Activated CD4-positive, alpha-beta memory T cell treated with anti-CD3 and anti-CD28 coated beads for 36 hours (primary cell): ENCODE measurements at regions of chr5 and their contacts with region 1.

Region 1: GRCh38 chr5:143824851-143825720 is 13.1 kb downstream of the HMHB1 start:
- DNase-seq: peak; percentile 89
- H3K4me3 Mint-ChIP-seq: no peak overlapping the region
- H3K27ac Mint-ChIP-seq: no peak overlapping the region
- H3K4me1 Mint-ChIP-seq: peaks cover 22% of the 10 kb centered on the region
- H3K27me3 Mint-ChIP-seq: peaks cover 3% of the 10 kb centered on the region

Region 2: GRCh38 chr5:143101121-143101520 is 724.0 kb before region 1 on chr5:
- CTCF ChIA-PET with region 1: no interaction called
- POLR2A ChIA-PET with region 1: no interaction called
- intact Hi-C with region 1: loop called (anchors 5 kb)
- DNase-seq: peak; percentile 23
- H3K4me3 Mint-ChIP-seq: no peak overlapping the region
- H3K27ac Mint-ChIP-seq: peak overlapping the region; percentile 90
- H3K4me1 Mint-ChIP-seq: peaks cover 40% of the 10 kb centered on the region
- H3K27me3 Mint-ChIP-seq: no peaks in the 10 kb centered on the region

Region 3: DNA sequence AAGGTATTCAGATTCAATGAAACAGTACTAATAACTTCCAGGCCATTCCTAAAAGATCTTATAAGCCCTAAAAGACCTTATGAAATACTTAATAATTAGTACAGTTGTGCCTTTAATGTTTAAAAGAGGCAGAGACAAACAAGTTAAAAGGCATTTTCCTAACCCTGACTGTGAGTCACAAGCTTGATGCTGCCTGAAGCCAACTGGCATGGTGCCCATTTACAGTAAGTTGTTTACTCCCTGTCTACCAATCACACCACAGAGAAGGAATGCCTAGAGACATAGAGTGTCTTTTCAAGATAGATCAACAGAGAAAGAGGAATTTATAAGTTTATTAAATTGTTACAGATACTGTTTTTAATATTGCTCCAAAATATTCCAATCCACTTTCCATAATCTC is 469.4 kb before region 1 on chr5:
- CTCF ChIA-PET with region 1: no interaction called
- POLR2A ChIA-PET with region 1: no interaction called
- intact Hi-C with region 1: loop called (anchors 5 kb)
- DNase-seq: peak; percentile 50
- H3K4me3 Mint-ChIP-seq: no peak overlapping the region
- H3K27ac Mint-ChIP-seq: no peak overlapping the region
- H3K4me1 Mint-ChIP-seq: peaks cover 75% of the 10 kb centered on the region
- H3K27me3 Mint-ChIP-seq: no peaks in the 10 kb centered on the region

Region 4: DNA sequence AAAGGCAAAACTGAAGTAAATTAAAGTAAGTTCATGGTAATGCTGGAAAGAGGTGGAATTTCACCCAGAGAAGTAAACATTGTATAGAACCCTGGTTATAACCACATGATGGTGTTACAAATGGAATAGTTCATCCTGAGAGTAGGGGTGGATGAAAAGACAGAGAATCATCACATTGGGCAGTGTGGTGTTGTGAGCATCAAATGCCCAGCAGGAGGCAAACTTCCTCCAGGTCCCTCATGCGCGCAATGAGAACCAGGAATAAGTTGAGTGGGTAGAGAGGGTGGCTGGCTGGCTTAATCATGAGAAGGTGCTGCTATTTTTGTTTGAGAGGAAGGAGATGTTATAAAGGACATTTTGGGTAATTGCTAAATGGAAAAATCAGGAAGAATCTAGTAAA is 176.4 kb before region 1 on chr5:
- CTCF ChIA-PET with region 1: interaction called, 11 read pairs
- POLR2A ChIA-PET with region 1: no interaction called
- intact Hi-C with region 1: loop called (anchors 1 kb)
- DNase-seq: peak; percentile 21
- H3K4me3 Mint-ChIP-seq: no peak overlapping the region
- H3K27ac Mint-ChIP-seq: no peak overlapping the region
- H3K4me1 Mint-ChIP-seq: peaks cover 18% of the 10 kb centered on the region
- H3K27me3 Mint-ChIP-seq: peaks cover 3% of the 10 kb centered on the region

Region 5: GRCh38 chr5:143957455-143957854 is 132.4 kb after region 1 on chr5:
- CTCF ChIA-PET with region 1: no interaction called
- POLR2A ChIA-PET with region 1: no interaction called
- intact Hi-C with region 1: no loop called
- DNase-seq: no peak
- H3K4me3 Mint-ChIP-seq: no peak overlapping the region
- H3K27ac Mint-ChIP-seq: no peak overlapping the region
- H3K4me1 Mint-ChIP-seq: no peaks in the 10 kb centered on the region
- H3K27me3 Mint-ChIP-seq: peaks cover 7% of the 10 kb centered on the region

Region 6: DNA sequence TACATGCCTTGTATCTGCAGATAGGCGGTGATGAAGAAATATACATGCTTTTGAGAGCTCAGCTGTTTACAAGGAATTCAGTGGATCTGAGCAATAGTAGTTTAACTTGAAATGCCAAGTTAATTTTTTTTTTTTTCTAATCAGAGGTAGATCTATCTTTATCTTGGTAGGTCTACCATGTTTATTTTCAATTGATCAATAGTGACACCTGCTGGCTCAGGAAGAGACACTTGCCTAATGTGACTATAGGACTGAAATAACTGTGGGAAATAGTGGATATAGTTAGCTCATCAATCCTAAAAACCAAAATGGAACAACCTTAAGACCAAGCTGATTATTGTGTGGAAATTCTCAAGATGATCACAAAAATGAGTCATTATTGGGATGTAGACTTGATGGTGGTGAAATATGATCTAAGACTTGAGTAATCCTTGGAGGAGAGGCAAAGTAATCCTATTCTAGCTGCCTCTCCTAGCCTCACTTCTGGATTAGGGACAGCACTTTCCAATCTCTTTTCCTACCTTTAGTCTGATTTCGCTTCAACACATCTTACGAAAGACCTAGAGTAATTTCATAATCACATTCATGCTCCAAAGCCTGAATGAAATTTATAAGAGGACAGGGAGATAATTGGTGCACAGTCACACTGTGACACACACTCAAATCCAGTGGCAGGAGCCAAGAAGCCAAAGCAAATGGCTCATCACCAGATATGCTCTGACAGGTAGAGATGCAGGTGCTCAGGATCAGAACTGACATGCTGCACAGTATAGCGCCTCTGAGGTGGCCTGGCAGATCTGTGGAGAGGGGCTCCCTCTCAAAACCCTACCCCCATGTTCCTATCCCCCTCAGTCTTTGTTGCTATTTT is 143.2 kb after region 1 on chr5:
- CTCF ChIA-PET with region 1: interaction called, 3 read pairs
- POLR2A ChIA-PET with region 1: no interaction called
- intact Hi-C with region 1: loop called (anchors 5 kb)
- DNase-seq: no peak
- H3K4me3 Mint-ChIP-seq: no peak overlapping the region
- H3K27ac Mint-ChIP-seq: no peak overlapping the region
- H3K4me1 Mint-ChIP-seq: no peaks in the 10 kb centered on the region
- H3K27me3 Mint-ChIP-seq: peaks cover 15% of the 10 kb centered on the region

Region 7: GRCh38 chr5:143987751-143988560 is 162.9 kb after region 1 on chr5:
- CTCF ChIA-PET with region 1: no interaction called
- POLR2A ChIA-PET with region 1: no interaction called
- intact Hi-C with region 1: no loop called
- DNase-seq: no peak
- H3K4me3 Mint-ChIP-seq: no peak overlapping the region
- H3K27ac Mint-ChIP-seq: no peak overlapping the region
- H3K4me1 Mint-ChIP-seq: peaks cover 5% of the 10 kb centered on the region
- H3K27me3 Mint-ChIP-seq: peaks cover 8% of the 10 kb centered on the region

Region 8: GRCh38 chr5:144659634-144660227 is 834.6 kb after region 1 on chr5:
- CTCF ChIA-PET with region 1: no interaction called
- POLR2A ChIA-PET with region 1: no interaction called
- intact Hi-C with region 1: no loop called
- DNase-seq: no peak
- H3K4me3 Mint-ChIP-seq: no peak overlapping the region
- H3K27ac Mint-ChIP-seq: no peak overlapping the region
- H3K4me1 Mint-ChIP-seq: no peaks in the 10 kb centered on the region
- H3K27me3 Mint-ChIP-seq: no peaks in the 10 kb centered on the region